Calu3 (cell line): ENCODE measurements at regions of chr1 and their contacts with region 1.

Region 1: DNA sequence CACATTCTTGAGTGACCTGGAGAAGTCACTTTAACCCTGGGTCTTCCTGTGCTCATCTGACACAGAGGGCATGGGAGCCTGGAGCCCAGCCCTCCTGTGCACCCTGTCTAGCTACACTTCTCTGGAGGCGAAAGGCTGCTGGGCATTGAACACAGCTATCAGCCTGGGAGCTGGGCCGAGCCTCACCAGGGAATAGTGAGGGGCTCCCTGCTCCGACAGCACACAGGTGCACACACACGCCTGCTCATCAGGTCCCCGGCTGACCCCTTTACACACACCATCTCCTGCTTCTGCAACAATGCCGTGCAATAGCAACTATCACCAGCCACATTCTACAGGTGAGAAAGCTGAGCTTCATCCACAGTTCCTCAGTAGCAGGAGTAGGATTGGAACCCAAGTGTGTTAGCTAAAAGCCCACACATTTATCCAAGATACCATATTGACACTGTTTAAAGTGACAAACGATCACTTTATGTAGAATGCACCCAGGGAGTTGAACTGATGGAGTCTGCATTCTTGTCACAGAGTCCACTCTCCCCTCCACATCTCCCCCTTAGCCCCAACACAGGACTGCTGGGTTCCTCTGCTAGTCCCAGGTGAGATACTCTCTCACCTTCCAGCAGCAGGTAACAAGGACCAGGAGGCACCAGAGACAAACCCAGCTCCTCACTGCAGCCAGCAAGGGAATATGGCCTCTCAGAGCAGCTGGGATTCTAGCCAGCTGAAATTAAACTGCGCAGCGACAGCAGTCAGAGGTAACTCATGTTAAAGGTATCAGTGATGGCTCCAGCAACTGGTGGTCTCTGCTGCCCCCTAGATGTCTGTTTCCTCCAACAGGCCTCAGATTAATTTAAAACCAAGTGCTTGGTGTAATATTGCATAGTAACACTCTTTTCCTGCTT is 18.3 kb upstream of the CAPN8 start:
- DNase-seq: peak; percentile 87
- H3K4me3 Mint-ChIP-seq: no peak overlapping the region
- H3K27ac Mint-ChIP-seq: no peak overlapping the region
- H3K4me1 Mint-ChIP-seq: peaks cover 11% of the 10 kb centered on the region
- H3K27me3 Mint-ChIP-seq: no peaks in the 10 kb centered on the region
- CTCF ChIP-seq: peak; percentile 89

Region 2: GRCh38 chr1:222792744-222793143 is 891.1 kb before region 1 on chr1:
- CTCF ChIA-PET with region 1: interaction called, 3 read pairs
- intact Hi-C with region 1: loop called (anchors 5 kb)
- DNase-seq: no peak
- H3K4me3 Mint-ChIP-seq: no peak overlapping the region
- H3K27ac Mint-ChIP-seq: no peak overlapping the region
- H3K4me1 Mint-ChIP-seq: no peaks in the 10 kb centered on the region
- H3K27me3 Mint-ChIP-seq: peaks cover 20% of the 10 kb centered on the region
- CTCF ChIP-seq: peak; percentile 55

Region 3: GRCh38 chr1:223244366-223245103 is 439.3 kb before region 1 on chr1:
- CTCF ChIA-PET with region 1: no interaction called
- intact Hi-C with region 1: loop called (anchors 10 kb)
- DNase-seq: peak; percentile 43
- H3K4me3 Mint-ChIP-seq: no peak overlapping the region
- H3K27ac Mint-ChIP-seq: peak overlapping the region; percentile 40
- H3K4me1 Mint-ChIP-seq: peaks cover 45% of the 10 kb centered on the region
- H3K27me3 Mint-ChIP-seq: no peaks in the 10 kb centered on the region
- CTCF ChIP-seq: no peak

Region 4: GRCh38 chr1:223531742-223532341 is 152.0 kb before region 1 on chr1:
- CTCF ChIA-PET with region 1: interaction called, 7 read pairs
- intact Hi-C with region 1: loop called (anchors 1 kb)
- DNase-seq: peak; percentile 85
- H3K4me3 Mint-ChIP-seq: no peak overlapping the region
- H3K27ac Mint-ChIP-seq: no peak overlapping the region
- H3K4me1 Mint-ChIP-seq: no peaks in the 10 kb centered on the region
- H3K27me3 Mint-ChIP-seq: peaks cover 58% of the 10 kb centered on the region
- CTCF ChIP-seq: peak; percentile 87

Region 5: GRCh38 chr1:223556414-223557129 is 127.3 kb before region 1 on chr1:
- CTCF ChIA-PET with region 1: interaction called, 36 read pairs
- intact Hi-C with region 1: no loop called
- DNase-seq: peak; percentile 89
- H3K4me3 Mint-ChIP-seq: no peak overlapping the region
- H3K27ac Mint-ChIP-seq: no peak overlapping the region
- H3K4me1 Mint-ChIP-seq: peaks cover 2% of the 10 kb centered on the region
- H3K27me3 Mint-ChIP-seq: no peaks in the 10 kb centered on the region
- CTCF ChIP-seq: peak; percentile 96

Region 6: GRCh38 chr1:223860051-223860622 is 176.3 kb after region 1 on chr1:
- CTCF ChIA-PET with region 1: no interaction called
- intact Hi-C with region 1: no loop called
- DNase-seq: no peak
- H3K4me3 Mint-ChIP-seq: no peak overlapping the region
- H3K27ac Mint-ChIP-seq: no peak overlapping the region
- H3K4me1 Mint-ChIP-seq: peaks cover 18% of the 10 kb centered on the region
- H3K27me3 Mint-ChIP-seq: no peaks in the 10 kb centered on the region
- CTCF ChIP-seq: no peak